HepG2 (cell line): ENCODE measurements at regions of chr2 and their contacts with region 1.

Region 1: GRCh38 chr2:212892193-212892592 is 259.2 kb downstream of the IKZF2 start:
- DNase-seq: peak; percentile 46
- ATAC-seq: peak; percentile 80
- H3K4me3 ChIP-seq: no peak overlapping the region
- H3K27ac ChIP-seq: no peak overlapping the region
- H3K4me1 ChIP-seq: no peaks in the 10 kb centered on the region
- H3K27me3 ChIP-seq: no peaks in the 10 kb centered on the region
- CTCF ChIP-seq: peak; percentile 55
- EP300 ChIP-seq: no peak
- POLR2A ChIP-seq: no peak
- RAD21 ChIP-seq: no peak

Region 2: DNA sequence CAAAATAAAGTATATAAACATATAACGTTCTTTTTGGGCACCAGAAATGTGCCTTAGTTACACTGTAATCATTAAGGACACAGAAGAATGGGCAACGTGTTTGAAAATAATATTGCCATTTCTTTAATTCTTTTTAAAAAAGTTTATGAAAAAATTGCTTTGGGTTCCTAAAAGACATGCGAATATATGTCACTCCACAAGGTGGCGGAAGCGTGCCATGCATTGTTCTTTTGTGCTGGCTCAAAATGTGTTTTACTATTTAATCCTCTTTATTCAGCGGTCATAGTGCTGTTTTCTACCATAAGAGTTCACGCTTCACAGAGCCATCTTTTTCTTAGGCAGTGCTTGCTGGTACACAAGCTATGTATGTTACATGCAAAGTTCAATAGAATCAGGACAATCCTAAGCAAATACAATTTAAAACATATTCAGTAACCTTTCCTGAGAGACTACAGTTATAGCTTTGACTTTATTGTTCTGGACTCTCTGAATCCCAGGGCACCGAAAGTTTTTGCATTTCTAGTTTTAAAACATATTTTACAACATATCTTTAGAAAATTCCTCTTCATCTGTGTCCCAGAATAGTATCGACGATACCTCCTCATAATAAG is 205.8 kb before region 1 on chr2:
- CTCF ChIA-PET with region 1: interaction called, 12 read pairs
- POLR2A ChIA-PET with region 1: no interaction called
- in situ Hi-C with region 1: loop called (anchors 10 kb)
- intact Hi-C with region 1: no loop called
- DNase-seq: peak; percentile 49
- ATAC-seq: peak; percentile 61
- H3K4me3 ChIP-seq: no peak overlapping the region
- H3K27ac ChIP-seq: no peak overlapping the region
- H3K4me1 ChIP-seq: no peaks in the 10 kb centered on the region
- H3K27me3 ChIP-seq: no peaks in the 10 kb centered on the region
- CTCF ChIP-seq: peak; percentile 78
- EP300 ChIP-seq: no peak
- POLR2A ChIP-seq: no peak
- RAD21 ChIP-seq: 0 out of 2 replicates have a peak, but pooled peaks have one; percentile 49

Region 3: GRCh38 chr2:212777020-212777491 is 115.1 kb before region 1 on chr2:
- CTCF ChIA-PET with region 1: no interaction called
- POLR2A ChIA-PET with region 1: no interaction called
- in situ Hi-C with region 1: no loop called
- intact Hi-C with region 1: loop called (anchors 1 kb)
- DNase-seq: peak; percentile 6
- ATAC-seq: peak; percentile 41; the same call in 2 of the 3 replicates
- H3K4me3 ChIP-seq: no peak overlapping the region
- H3K27ac ChIP-seq: no peak overlapping the region
- H3K4me1 ChIP-seq: no peaks in the 10 kb centered on the region
- H3K27me3 ChIP-seq: no peaks in the 10 kb centered on the region
- CTCF ChIP-seq: peak; percentile 49
- EP300 ChIP-seq: no peak
- POLR2A ChIP-seq: no peak
- RAD21 ChIP-seq: no peak

Region 4: GRCh38 chr2:212863185-212863588 is 29.0 kb before region 1 on chr2:
- CTCF ChIA-PET with region 1: no interaction called
- POLR2A ChIA-PET with region 1: no interaction called
- in situ Hi-C with region 1: no loop called
- intact Hi-C with region 1: loop called (anchors 1 kb)
- DNase-seq: peak; percentile 28
- ATAC-seq: peak; percentile 75
- H3K4me3 ChIP-seq: no peak overlapping the region
- H3K27ac ChIP-seq: no peak overlapping the region
- H3K4me1 ChIP-seq: no peaks in the 10 kb centered on the region
- H3K27me3 ChIP-seq: no peaks in the 10 kb centered on the region
- CTCF ChIP-seq: peak; percentile 64
- EP300 ChIP-seq: no peak
- POLR2A ChIP-seq: no peak
- RAD21 ChIP-seq: peak; percentile 43